Pancreas (tissue), 10 donors: ENCODE measurements at regions of chrX and their contacts with region 1.

Region 1: GRCh38 chrX:103533511-103534216 is 14.4 kb upstream of the RAB40A start:
- DNase-seq: peak; percentile 36 to 89 (median 76)
- ATAC-seq: peak; percentile 71 to 96 (median 90)
- H3K4me3 ChIP-seq: peak overlapping the region in 2 of 4 donors; percentile 8 to 37
- H3K27ac ChIP-seq: no peak overlapping the region
- H3K4me1 ChIP-seq: no peaks in the 10 kb centered on the region
- H3K27me3 ChIP-seq: peaks cover 0 to 20% (median 2%) of the 10 kb centered on the region in 4 donors
- CTCF ChIP-seq: peak; percentile 62 to 80 (median 74)

Region 2: DNA sequence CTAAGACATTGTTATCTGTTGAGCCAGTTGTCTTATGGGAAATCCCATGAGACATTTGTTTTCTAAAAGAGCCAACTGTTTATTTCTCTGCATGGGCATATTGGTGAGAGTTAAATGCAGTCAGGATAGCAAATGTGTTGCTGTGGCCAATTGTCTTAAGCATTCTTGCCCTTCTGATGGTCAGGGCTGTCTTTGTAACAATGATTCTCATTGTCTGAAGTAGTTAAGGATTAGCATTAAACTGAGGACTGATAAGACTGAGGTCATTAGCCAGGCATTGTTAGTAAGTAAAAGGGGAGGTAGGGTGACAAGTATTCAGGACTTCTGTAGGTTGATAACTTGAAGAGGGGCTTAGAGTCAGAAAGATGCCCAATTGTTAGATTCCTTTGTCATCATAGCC is 164.0 kb after region 1 on chrX:
- intact Hi-C with region 1: loop called in 1 of 3 experiments (anchors 10 kb)
- DNase-seq: no peak
- ATAC-seq: no peak
- H3K4me3 ChIP-seq: no peak overlapping the region
- H3K27ac ChIP-seq: no peak overlapping the region
- H3K4me1 ChIP-seq: no peaks in the 10 kb centered on the region
- H3K27me3 ChIP-seq: no peaks in the 10 kb centered on the region
- CTCF ChIP-seq: no peak

Region 3: GRCh38 chrX:103774070-103774642 is 240.5 kb after region 1 on chrX:
- intact Hi-C with region 1: loop called in 1 of 3 experiments (anchors 10 kb)
- DNase-seq: no peak
- ATAC-seq: peak in 3 of 4 donors; percentile 71 to 87 (median 82)
- H3K4me3 ChIP-seq: no peak overlapping the region
- H3K27ac ChIP-seq: no peak overlapping the region
- H3K4me1 ChIP-seq: no peaks in the 10 kb centered on the region
- H3K27me3 ChIP-seq: peaks cover 0 to 10% (median 0%) of the 10 kb centered on the region in 4 donors
- CTCF ChIP-seq: peak in 2 of 4 donors; percentile 40 to 41